ENCODE measurements at regions of chr13 and their contacts with region 1.

Region 1: GRCh38 chr13:107941345-107942029 is 273.8 kb downstream of the LIG4 start:
- DNase-seq: peak in 1 of 4 experiments; percentile 55
- ATAC-seq: peak; percentile 64
- H3K4me3 ChIP-seq: no peak overlapping the region
- H3K27ac ChIP-seq: peak overlapping the region; percentile 52
- H3K4me1 ChIP-seq: peaks cover 15 to 31% of the 10 kb centered on the region in 2 experiments
- H3K27me3 ChIP-seq: no peaks in the 10 kb centered on the region; a peak in 1 of 5 replicates
- CTCF ChIP-seq: no peak
- EP300 ChIP-seq: no peak
- POLR2A ChIP-seq: no peak
- RAD21 ChIP-seq: no peak

Region 2: GRCh38 chr13:107867701-107868661 is 73.5 kb before region 1 on chr13:
- CTCF ChIA-PET with region 1: no interaction called
- POLR2A ChIA-PET with region 1: interaction called, 3 read pairs
- in situ Hi-C with region 1: no loop called
- intact Hi-C with region 1: loop called (anchors 5 kb)
- DNase-seq: peak; percentile 73 to 85 (median 78)
- ATAC-seq: peak; percentile 75
- H3K4me3 ChIP-seq: peak overlapping the region; percentile 48
- H3K27ac ChIP-seq: no peak overlapping the region; the same call in 2 of the 3 replicates
- H3K4me1 ChIP-seq: peaks cover 22 to 31% of the 10 kb centered on the region in 2 experiments; a peak in 4 of 5 replicates
- H3K27me3 ChIP-seq: peaks cover 18 to 28% of the 10 kb centered on the region in 2 experiments
- CTCF ChIP-seq: no peak
- EP300 ChIP-seq: no peak
- POLR2A ChIP-seq: no peak
- RAD21 ChIP-seq: no peak

Region 3: GRCh38 chr13:107900775-107901174 is 40.7 kb before region 1 on chr13:
- CTCF ChIA-PET with region 1: no interaction called
- POLR2A ChIA-PET with region 1: no interaction called
- in situ Hi-C with region 1: no loop called
- intact Hi-C with region 1: loop called (anchors 1 kb)
- DNase-seq: peak in 3 of 4 experiments; percentile 53 to 73 (median 55)
- ATAC-seq: peak; percentile 49
- H3K4me3 ChIP-seq: no peak overlapping the region
- H3K27ac ChIP-seq: peak overlapping the region; percentile 19; the same call in 1 of the 3 replicates
- H3K4me1 ChIP-seq: peaks cover 0 to 26% of the 10 kb centered on the region in 2 experiments; a peak in 3 of 5 replicates
- H3K27me3 ChIP-seq: no peaks in the 10 kb centered on the region
- CTCF ChIP-seq: no peak
- EP300 ChIP-seq: no peak
- POLR2A ChIP-seq: no peak
- RAD21 ChIP-seq: no peak

Region 4: GRCh38 chr13:107912745-107913144 is 28.7 kb before region 1 on chr13:
- CTCF ChIA-PET with region 1: no interaction called
- POLR2A ChIA-PET with region 1: interaction called, 11 read pairs
- in situ Hi-C with region 1: no loop called
- intact Hi-C with region 1: loop called (anchors 2 kb)
- DNase-seq: peak in 1 of 4 experiments; percentile 77
- ATAC-seq: peak; percentile 70
- H3K4me3 ChIP-seq: peak overlapping the region; percentile 39
- H3K27ac ChIP-seq: peak overlapping the region; percentile 60; the same call in 2 of the 3 replicates
- H3K4me1 ChIP-seq: peaks cover 3 to 36% of the 10 kb centered on the region in 2 experiments
- H3K27me3 ChIP-seq: no peaks in the 10 kb centered on the region
- CTCF ChIP-seq: no peak
- EP300 ChIP-seq: no peak
- POLR2A ChIP-seq: no peak
- RAD21 ChIP-seq: no peak

Region 5: GRCh38 chr13:107956889-107957288 is 15.4 kb after region 1 on chr13:
- CTCF ChIA-PET with region 1: no interaction called
- POLR2A ChIA-PET with region 1: interaction called, 28 read pairs
- in situ Hi-C with region 1: no loop called
- intact Hi-C with region 1: no loop called
- DNase-seq: peak in 3 of 4 experiments; percentile 55 to 66 (median 64)
- ATAC-seq: peak; percentile 64
- H3K4me3 ChIP-seq: no peak overlapping the region
- H3K27ac ChIP-seq: no peak overlapping the region
- H3K4me1 ChIP-seq: no peaks in the 10 kb centered on the region
- H3K27me3 ChIP-seq: no peaks in the 10 kb centered on the region
- CTCF ChIP-seq: no peak
- EP300 ChIP-seq: no peak
- POLR2A ChIP-seq: no peak
- RAD21 ChIP-seq: no peak

Region 6: GRCh38 chr13:108495646-108496361 is 554.3 kb after region 1 on chr13:
- CTCF ChIA-PET with region 1: no interaction called
- POLR2A ChIA-PET with region 1: no interaction called
- in situ Hi-C with region 1: no loop called
- intact Hi-C with region 1: no loop called
- DNase-seq: peak in 1 of 4 experiments; percentile 12
- ATAC-seq: peak; percentile 64
- H3K4me3 ChIP-seq: peak overlapping the region; percentile 42
- H3K27ac ChIP-seq: no peak overlapping the region
- H3K4me1 ChIP-seq: peaks cover 0 to 5% of the 10 kb centered on the region in 2 experiments; a peak in 1 of 5 replicates
- H3K27me3 ChIP-seq: no peaks in the 10 kb centered on the region
- CTCF ChIP-seq: no peak
- EP300 ChIP-seq: no peak
- POLR2A ChIP-seq: no peak
- RAD21 ChIP-seq: no peak

Measured in K562 (cell line).